OCI-LY7 (cell line): ENCODE measurements at regions of chr16 and their contacts with region 1.

Region 1: DNA sequence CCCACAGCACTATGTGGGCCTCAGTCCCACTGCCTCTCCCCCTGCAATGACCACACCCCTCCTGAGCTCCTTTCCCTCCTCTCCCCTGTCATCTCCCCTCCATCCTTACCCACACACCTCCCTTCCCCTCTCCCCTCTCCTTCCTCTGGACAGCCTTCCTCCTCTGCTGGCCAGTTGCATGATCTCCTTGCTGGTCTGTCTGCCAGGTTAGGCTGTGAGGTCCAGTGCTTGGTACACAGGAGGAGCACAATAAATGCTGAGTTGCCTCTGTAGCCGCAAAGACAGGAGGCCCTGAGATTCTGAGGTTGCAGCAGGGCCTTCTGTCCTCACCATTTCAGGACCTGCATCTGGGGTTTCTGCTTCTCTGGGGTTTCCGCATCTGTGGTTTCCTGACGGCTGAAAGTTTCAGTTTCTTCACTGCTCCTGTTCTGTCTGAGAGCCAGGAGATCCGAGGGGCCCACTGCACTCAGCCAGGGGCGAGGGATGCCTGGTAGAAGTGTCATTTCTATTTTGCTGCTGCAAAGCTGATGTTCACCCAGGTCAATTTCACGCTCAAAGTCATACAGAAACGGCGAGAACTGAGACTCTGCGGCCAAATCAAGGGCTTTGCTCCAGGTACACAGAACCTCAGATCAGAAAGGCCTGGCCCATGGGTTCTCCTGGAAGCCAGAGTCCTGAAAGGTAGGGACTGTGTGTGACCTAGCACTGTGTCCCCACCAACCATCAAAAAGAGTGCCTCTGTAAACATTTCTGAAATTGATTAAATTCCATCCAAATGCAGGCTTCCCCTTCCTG is 4.6 kb upstream of the SLC12A3 start:
- DNase-seq: peak; percentile 85
- H3K4me3 ChIP-seq: peak overlapping the region; percentile 48
- H3K27ac ChIP-seq: peak overlapping the region; percentile 85
- H3K4me1 ChIP-seq: peaks cover 47% of the 10 kb centered on the region
- CTCF ChIP-seq: no peak

Region 2: DNA sequence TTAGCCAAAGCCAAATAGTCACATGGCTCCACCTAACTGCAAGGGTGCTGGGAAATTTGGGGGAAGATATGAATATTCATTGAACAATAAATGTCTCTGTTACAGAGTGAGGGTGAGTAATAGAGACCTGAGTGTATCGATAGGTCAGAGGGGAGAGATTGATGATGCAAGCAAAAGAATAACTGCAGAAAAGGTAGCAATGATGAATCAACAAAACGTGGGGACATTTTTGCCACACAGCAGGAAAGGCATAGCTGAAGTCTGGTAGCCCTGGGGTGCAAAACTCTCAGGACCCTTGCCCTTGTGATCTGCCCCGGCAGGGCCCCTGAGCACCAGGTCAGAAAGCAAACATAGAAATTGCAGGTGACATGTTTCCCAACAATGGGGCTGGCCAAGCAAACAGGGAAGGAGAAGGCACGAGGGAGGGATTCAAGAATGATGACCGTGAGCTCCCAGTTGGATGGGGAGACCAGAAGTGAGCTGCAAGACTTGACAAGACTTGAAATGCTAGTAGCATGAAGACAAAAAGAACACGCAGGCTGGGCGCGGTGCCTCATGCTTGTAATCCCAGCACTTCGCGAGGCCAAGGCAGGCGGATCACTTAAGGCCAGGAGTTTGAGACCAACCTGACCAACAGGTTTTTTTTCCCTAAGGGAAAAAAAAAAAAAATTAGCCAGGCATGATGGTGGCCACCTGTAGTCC is 58.8 kb after region 1 on chr16:
- CTCF ChIA-PET with region 1: interaction called, 3 read pairs
- POLR2A ChIA-PET with region 1: interaction called, 12 read pairs
- intact Hi-C with region 1: no loop called
- DNase-seq: no peak
- H3K4me3 ChIP-seq: no peak overlapping the region
- H3K27ac ChIP-seq: peak overlapping the region; percentile 92
- H3K4me1 ChIP-seq: peaks cover 68% of the 10 kb centered on the region
- CTCF ChIP-seq: no peak